Activated CD8-positive, alpha-beta T cell treated with anti-CD3 and anti-CD28 coated beads for 36 hours (primary cell): ENCODE measurements at regions of chr16 and their contacts with region 1.

Region 1: GRCh38 chr16:2155091-2156021 is at the start of gene TRAF7:
- DNase-seq: peak; percentile 99
- ATAC-seq: peak; percentile 95
- H3K4me3 Mint-ChIP-seq: peak within 1 kb of the TSS; percentile 86
- H3K27ac Mint-ChIP-seq: peak within 1 kb of the TSS; percentile 89
- H3K4me1 Mint-ChIP-seq: peaks cover 30% of the 10 kb centered on the region
- H3K27me3 Mint-ChIP-seq: no peaks in the 10 kb centered on the region
- CTCF ChIP-seq: no peak
- total RNA-seq, gene TRAF7: 74.8 to 80.2 TPM

Region 2: GRCh38 chr16:1964506-1965395 is 190.6 kb before region 1 on chr16 and contains the start of gene RPS2:
- CTCF ChIA-PET with region 1: interaction called, 3 read pairs
- POLR2A ChIA-PET with region 1: interaction called, 80 read pairs
- intact Hi-C with region 1: no loop called
- DNase-seq: peak; percentile 99
- ATAC-seq: peak; percentile 87
- H3K4me3 Mint-ChIP-seq: peak within 1 kb of the TSS; percentile 98
- H3K27ac Mint-ChIP-seq: peak within 1 kb of the TSS; percentile 96
- H3K4me1 Mint-ChIP-seq: peaks cover 33% of the 10 kb centered on the region
- H3K27me3 Mint-ChIP-seq: no peaks in the 10 kb centered on the region
- CTCF ChIP-seq: no peak
- total RNA-seq, gene RPS2: 5,572 to 5,598 TPM

Region 3: DNA sequence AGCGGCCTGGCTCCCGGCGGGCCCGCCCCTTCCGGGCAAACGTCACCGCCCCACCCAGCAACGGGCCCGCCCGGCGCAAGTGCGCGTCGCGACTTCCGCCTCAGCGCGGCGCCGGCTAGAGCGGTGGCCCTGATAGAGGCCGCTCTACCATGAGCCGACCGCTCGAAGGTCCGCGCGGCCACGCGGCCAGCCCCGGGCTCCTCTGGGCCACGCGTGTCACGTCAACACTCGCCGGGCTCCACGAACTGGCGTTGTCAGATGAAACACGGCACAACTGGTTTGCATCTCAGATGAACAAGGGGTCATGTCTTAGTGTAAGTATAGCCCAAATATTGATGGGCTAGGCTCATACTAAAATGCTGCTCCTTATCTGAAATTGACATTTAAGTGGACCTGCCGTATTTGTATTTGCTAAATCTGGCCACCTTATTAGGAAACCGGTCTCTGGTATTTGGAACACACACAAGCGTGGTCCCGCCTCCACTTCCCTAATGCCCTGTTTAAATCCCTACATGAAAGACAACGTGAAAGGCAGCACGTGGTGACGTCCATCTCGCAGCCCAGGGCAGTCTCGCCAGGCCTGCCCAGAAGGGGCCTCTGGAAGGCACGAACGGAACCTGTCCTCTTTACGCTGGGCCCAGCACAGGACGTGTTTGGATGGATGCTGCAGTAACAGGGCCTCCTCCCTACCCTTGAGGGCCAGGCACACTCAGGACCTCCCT is 145.4 kb before region 1 on chr16 and contains the start of gene ZNF598:
- CTCF ChIA-PET with region 1: interaction called, 4 read pairs
- POLR2A ChIA-PET with region 1: interaction called, 16 read pairs
- intact Hi-C with region 1: no loop called
- DNase-seq: peak; percentile 83
- ATAC-seq: peak; percentile 94
- H3K4me3 Mint-ChIP-seq: peak within 1 kb of the TSS; percentile 97
- H3K27ac Mint-ChIP-seq: peak within 1 kb of the TSS; percentile 94
- H3K4me1 Mint-ChIP-seq: peaks cover 39% of the 10 kb centered on the region
- H3K27me3 Mint-ChIP-seq: no peaks in the 10 kb centered on the region
- CTCF ChIP-seq: no peak
- total RNA-seq, gene ZNF598: 85.5 to 90.3 TPM

Region 4: GRCh38 chr16:2174401-2175131 is 19.2 kb after region 1 on chr16:
- CTCF ChIA-PET with region 1: no interaction called
- POLR2A ChIA-PET with region 1: interaction called, 21 read pairs
- intact Hi-C with region 1: no loop called
- DNase-seq: no peak
- ATAC-seq: no peak
- H3K4me3 Mint-ChIP-seq: no peak overlapping the region
- H3K27ac Mint-ChIP-seq: no peak overlapping the region
- H3K4me1 Mint-ChIP-seq: no peaks in the 10 kb centered on the region
- H3K27me3 Mint-ChIP-seq: no peaks in the 10 kb centered on the region
- CTCF ChIP-seq: no peak

Region 5: DNA sequence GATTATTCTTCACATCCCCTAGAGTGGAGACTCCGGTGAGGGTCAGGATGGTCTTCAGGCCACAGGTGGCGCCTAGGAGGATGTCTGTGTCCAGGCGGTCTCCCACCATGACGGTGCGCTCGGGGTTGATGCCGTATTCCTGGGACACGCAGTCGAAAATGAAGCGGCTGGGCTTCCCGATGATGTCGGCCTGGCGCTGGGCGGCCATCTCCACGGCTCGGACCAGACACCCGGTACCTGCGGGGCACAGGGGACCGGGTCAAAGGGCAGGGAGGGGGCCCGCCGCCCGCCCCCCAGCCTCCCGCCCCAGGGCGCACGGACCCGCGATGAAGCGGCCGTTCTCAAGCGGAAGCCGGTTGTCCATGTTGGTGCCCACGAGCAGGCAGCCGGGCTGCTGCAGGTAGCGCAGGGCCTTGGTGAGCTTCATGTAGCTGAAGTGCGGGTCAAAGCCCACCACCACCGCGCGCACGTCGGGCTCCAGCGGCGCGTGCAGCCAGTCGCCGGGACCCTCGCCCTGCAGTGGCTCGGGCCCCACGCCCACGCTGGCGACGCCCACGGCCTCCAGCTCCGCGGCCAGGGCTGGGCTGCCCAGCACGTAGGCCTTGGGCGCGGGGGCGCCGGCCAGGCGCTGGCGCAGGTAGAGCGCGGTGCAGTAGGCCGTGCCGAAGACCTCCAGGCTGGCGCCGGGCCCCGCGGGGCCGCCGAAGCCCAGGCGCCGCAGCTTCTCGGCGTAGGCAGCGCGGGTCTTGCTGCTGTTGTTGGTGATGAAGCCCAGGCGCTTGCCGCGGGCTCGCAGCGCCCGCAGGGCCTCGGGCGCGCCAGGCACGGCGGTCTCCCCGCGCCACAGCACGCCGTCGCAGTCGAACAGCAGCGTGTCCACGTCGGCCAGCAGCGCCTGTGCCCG is 58.7 kb after region 1 on chr16:
- CTCF ChIA-PET with region 1: interaction called, 3 read pairs
- POLR2A ChIA-PET with region 1: interaction called, 95 read pairs
- intact Hi-C with region 1: no loop called
- DNase-seq: no peak
- ATAC-seq: no peak
- H3K4me3 Mint-ChIP-seq: peak overlapping the region; percentile 84
- H3K27ac Mint-ChIP-seq: no peak overlapping the region
- H3K4me1 Mint-ChIP-seq: peaks cover 21% of the 10 kb centered on the region
- H3K27me3 Mint-ChIP-seq: no peaks in the 10 kb centered on the region
- CTCF ChIP-seq: no peak

Region 6: GRCh38 chr16:2531767-2532493 is 376.6 kb after region 1 on chr16:
- CTCF ChIA-PET with region 1: no interaction called
- POLR2A ChIA-PET with region 1: interaction called, 13 read pairs
- intact Hi-C with region 1: no loop called
- DNase-seq: peak; percentile 99
- ATAC-seq: peak; percentile 95
- H3K4me3 Mint-ChIP-seq: peak overlapping the region; percentile 88
- H3K27ac Mint-ChIP-seq: peak overlapping the region; percentile 98
- H3K4me1 Mint-ChIP-seq: peaks cover 15% of the 10 kb centered on the region
- H3K27me3 Mint-ChIP-seq: no peaks in the 10 kb centered on the region
- CTCF ChIP-seq: no peak